ENCODE measurements at regions of chr6 and their contacts with region 1.

Region 1: DNA sequence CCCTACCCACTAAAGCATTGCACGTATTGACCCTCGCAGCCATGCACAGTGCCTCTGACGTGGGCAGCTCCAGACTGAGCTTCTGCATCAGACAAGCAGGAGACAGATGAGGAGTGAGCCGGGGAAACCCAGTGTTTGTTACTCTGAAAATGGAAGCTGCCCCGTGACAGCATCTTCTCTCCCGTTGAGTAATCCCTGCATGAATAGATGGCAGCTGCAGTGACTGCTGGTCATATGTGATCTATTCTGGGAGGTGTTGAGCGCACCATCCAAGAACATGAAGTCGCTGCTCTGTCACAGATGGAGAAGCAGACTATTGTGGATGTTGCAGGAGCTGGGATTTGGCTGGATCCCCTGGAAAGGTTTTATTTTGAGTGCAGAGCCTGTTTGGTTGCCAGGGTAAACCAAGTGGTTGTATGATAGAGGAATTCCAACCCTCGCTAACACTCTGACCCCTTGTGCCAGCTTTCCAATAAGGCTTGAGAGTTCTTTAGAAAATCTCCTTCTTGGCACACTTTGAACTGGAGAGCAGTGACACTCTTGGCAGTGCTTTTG is 242.2 kb downstream of the NRN1 start:
- DNase-seq: peak; percentile 82

Region 2: GRCh38 chr6:5471044-5471443 is 293.4 kb before region 1 on chr6:
- intact Hi-C with region 1: loop called (anchors 10 kb)
- DNase-seq: no peak

Region 3: DNA sequence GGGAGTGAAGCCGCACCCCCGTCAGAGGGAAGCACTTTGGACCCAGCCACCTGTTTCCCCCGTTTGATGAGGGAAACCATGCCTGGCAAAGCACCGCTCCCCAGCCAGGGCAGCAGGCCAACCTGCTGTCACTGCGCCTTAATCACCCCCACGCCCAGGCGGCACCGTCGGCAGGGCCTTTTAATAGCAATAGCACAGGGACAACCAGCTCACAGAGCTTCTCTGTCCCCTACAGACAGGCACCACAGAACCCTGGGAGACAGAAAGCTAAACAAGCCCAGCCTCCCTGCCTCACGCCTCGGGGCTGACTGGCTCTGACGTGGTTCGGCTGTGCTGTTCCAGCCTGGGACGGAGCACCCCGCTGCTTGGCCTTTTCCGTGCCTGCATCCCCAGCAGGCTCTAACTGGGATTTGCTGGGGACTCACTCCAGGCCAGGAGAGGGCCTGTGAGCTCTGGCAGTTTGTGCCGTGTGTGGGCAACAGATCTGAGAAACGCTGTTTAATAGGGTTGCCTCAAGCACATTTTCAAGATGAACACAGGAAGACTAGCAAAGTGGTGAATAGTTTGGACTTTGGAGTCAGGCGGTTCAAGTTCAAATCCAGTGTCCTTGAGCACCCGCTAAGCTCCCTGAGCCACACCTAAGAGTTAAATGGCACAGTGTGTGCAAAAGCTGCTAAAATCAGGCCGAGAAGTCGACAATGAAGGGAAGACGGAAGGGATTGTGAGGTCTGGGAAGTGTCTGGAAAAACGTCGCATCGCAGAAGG is 18.5 kb after region 1 on chr6:
- intact Hi-C with region 1: loop called (anchors 2 kb)
- DNase-seq: peak; percentile 86

Region 4: DNA sequence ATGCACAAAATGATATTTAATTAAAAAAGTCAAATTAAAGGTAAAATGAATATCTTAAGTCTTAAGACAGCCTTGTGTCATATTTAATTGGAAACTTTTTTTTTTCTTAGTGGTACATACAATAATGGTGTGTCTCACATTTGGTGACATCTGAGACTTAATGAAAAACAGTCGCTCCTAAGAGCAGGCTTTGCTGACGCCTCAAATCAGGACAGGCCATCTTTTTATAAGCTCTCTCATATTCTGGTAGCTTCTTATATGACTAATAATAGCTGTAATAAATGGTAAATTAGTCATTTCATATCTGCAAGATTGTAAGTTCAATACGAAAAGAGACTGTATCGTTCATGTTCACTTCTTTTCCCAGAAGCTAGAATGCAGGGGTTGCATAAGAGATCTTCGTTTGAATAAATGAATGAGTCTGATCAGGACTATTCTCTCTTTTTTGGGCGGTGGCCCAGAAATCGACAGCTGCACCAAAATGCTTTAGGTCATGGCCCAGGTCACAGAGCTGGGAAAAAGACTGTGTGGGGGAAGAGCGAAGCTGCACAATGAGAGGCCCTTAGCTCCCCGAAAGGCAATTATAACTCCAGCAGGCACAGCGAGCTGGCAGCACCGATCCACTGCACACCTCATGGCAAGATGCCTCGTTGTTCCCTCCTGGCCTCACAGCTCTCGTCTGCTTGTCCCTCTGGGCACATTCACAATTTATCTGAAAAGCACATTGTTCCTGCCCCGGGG is 172.9 kb after region 1 on chr6:
- intact Hi-C with region 1: no loop called
- DNase-seq: no peak

Measured in cardiac septum (tissue), 1 donor.